Activated CD4-positive, alpha-beta T cell treated with anti-CD3 and anti-CD28 coated beads, Interleukin-2, amount 10 ng/mL, durations not matched to agents 24 days and 14 days (primary cell): ENCODE measurements at regions of chr6 and their contacts with region 1.

Region 1: DNA sequence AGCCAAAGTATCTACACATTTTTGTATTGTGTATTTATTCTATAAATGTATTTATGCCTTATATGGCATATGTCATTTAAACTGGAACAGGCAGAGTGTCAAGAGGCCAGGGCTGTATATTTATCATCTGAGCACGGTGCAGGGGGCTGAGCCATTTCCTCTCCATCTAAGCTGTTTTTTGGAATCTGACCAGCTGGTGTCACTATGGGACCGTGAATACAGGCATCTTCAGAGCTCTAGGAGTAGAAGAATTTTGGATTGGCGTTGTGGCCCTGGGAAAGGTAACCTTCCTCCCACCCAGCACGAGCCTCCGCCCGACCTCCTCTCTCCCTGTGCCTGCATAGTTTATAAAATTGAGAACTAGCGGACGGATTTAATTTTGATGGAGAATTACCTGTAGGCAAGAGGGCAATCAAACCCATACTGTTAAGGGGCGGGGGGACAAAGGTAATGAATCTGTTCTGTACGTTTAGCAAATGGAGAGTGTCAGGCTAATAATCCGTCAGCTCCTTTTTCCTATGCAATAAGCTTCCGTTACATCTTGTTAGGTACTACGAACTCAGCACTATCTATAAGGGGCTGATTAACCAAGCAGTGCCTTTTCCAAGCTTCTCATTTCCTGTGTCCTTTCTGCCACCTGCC is 29.0 kb upstream of the EEF1E1 start:
- DNase-seq: peak; percentile 82
- H3K4me3 Mint-ChIP-seq: no peak overlapping the region
- H3K27ac Mint-ChIP-seq: no peak overlapping the region
- H3K4me1 Mint-ChIP-seq: no peaks in the 10 kb centered on the region
- H3K27me3 Mint-ChIP-seq: peaks cover 8% of the 10 kb centered on the region

Region 2: DNA sequence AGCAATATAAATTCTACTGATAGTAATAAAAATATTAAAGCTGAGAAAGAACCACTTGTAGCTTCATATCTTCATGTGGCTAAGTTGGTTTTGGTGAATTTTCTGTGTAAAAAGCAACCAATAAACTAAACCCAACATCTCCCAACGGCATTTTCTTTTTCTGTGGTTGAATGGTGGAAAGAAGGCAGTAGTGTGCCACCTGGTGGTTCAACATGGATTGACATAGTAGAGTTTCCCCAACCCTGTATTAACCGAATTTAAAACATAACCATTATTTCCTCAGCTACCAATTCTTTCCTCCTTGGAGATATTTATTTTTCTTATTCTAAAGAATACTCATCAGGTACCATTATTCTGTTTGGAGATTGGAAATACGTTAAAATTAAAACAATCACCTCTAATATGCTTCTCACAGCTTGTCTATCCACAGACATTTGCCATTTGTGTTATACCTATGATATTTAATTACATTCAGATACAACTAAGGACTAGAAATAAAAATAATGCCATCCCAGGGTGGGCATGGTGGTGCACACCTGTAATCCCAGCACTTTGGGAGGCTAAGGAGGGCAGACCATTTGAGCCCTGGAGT is 88.1 kb after region 1 on chr6:
- intact Hi-C with region 1: loop called (anchors 1 kb)
- DNase-seq: peak; percentile 77
- H3K4me3 Mint-ChIP-seq: no peak overlapping the region
- H3K27ac Mint-ChIP-seq: no peak overlapping the region
- H3K4me1 Mint-ChIP-seq: no peaks in the 10 kb centered on the region
- H3K27me3 Mint-ChIP-seq: peaks cover 2% of the 10 kb centered on the region

Region 3: DNA sequence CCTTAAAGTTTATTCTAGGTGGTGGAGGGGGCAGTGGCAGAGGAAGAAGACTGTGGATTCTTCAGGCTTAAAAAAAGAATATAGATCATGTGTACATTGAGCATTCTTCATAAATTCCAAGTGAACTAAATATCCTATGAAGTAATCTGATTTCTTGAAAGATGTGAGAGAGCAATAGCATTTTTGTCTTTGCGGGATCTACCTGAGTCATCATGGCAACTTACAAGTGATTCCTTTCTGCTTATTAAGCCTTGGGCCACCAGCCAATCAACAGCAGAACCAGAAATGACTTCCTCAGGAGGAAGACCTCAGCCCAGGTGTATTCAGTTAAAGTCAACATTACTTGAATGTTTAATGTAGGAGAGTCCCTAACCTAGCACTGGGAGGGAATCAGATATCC is 1526.6 kb after region 1 on chr6:
- intact Hi-C with region 1: no loop called
- DNase-seq: no peak
- H3K4me3 Mint-ChIP-seq: no peak overlapping the region
- H3K27ac Mint-ChIP-seq: no peak overlapping the region
- H3K4me1 Mint-ChIP-seq: no peaks in the 10 kb centered on the region
- H3K27me3 Mint-ChIP-seq: no peaks in the 10 kb centered on the region